CD8-positive, alpha-beta memory T cell (primary cell): ENCODE measurements at regions of chr3 and their contacts with region 1.

Region 1: DNA sequence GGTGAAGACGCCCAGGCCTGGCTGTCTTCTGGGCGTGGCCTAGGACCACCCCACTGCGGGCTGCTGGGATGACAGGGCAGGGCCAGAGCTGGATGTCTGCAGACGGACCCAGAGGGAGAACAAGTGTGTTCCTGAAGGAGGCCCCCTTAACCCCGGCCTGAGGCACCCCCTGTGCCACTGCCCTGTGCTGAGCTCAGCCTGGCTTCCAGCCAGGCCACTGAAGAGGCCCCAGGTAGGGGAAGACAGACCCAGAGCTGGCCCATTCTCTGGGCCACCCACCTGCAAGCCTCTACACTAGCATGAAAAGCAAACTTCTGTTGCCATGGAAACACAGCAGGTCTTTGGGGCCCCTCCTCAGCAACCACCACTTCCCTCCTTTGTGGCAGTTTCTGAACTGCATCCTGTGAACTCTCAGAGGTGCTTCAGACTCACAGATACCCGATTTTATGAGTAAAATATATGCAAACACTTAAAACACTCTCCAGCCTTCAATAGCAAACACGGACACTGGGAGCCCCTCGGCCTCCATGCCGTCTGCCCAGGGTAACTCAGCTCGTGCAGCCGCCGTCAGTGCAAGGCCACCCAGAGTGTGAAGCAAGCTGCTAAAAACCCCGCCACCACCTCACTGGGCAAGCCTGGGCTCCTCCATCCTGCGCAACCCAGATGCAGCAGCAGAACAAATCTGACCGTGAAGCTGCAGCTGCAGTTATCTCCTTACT is 42.5 kb downstream of the CMTM6 start:
- DNase-seq: peak; percentile 59 to 96 (median 92)
- H3K4me3 ChIP-seq: peak overlapping the region; percentile 53
- H3K4me3 Mint-ChIP-seq: peak overlapping the region in 4 of 7 donors; percentile 81 to 88 (median 88)
- H3K27ac ChIP-seq: peak overlapping the region; percentile 88
- H3K27ac Mint-ChIP-seq: no peak overlapping the region
- H3K4me1 ChIP-seq: peaks cover 83% of the 10 kb centered on the region
- H3K4me1 Mint-ChIP-seq: peaks cover 31 to 37% (median 33%) of the 10 kb centered on the region in 3 donors
- H3K27me3 ChIP-seq: no peaks in the 10 kb centered on the region
- H3K27me3 Mint-ChIP-seq: no peaks in the 10 kb centered on the region

Region 2: DNA sequence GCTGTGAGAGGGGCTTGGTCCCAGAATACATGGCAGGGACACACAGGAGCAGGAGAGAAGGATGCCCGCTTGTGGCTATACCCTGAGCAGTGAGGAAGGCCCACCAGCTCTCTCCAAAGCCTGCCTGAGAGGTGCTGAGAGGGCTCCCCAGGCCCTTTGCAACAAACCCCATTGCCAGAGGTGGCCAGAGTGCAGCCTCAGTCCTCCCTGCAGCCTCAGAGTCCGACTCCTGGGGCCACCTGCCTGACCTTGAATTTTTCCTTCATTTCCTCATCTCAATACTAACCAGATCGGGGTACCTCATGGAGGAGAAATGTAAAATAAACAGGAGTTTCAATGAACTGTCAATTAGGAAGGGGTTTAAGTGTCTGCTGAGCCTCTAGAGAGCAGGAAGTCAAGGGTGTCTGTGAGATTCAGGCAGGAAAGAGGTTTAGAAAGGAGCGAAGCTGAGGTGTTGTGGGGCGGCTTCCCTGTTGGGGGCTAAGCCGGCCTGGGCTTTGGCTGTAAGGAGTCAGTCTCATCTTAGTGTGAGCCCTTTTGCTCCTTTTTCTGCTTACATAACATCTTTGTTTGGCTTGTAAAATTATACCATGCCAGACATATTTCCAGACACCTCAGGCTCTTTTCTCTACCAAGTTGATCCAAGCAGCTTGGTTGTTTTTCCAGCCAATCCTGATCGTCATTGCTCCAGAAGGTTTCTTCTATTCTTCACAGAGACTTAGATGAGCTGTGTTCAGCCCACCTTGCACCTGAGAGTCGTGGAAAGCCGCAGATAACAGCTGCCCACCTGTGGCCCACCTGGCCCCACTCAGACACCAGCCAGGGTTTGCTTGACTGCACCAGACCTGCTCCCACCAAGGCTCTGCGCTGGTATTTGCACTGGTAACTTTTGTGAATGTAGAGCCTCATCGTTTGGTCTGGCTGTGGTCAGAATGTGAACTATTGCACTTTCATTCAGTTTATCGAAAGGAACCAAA is 31.8 kb before region 1 on chr3:
- CTCF ChIA-PET with region 1: interaction called, 19 read pairs
- POLR2A ChIA-PET with region 1: interaction called, 40 read pairs
- DNase-seq: peak; percentile 23 to 73 (median 63)
- H3K4me3 ChIP-seq: peak overlapping the region; percentile 48
- H3K4me3 Mint-ChIP-seq: peak overlapping the region; percentile 48 to 88 (median 77)
- H3K27ac ChIP-seq: peak overlapping the region; percentile 35
- H3K27ac Mint-ChIP-seq: peak overlapping the region; percentile 92 to 98 (median 96)
- H3K4me1 ChIP-seq: peaks cover 91% of the 10 kb centered on the region
- H3K4me1 Mint-ChIP-seq: peaks cover 85 to 98% (median 93%) of the 10 kb centered on the region in 3 donors
- H3K27me3 ChIP-seq: no peaks in the 10 kb centered on the region
- H3K27me3 Mint-ChIP-seq: peaks cover 0 to 1% of the 10 kb centered on the region in 2 donors

Region 3: GRCh38 chr3:32438596-32439344 is 21.4 kb before region 1 on chr3:
- CTCF ChIA-PET with region 1: interaction called, 37 read pairs
- POLR2A ChIA-PET with region 1: interaction called, 7 read pairs
- DNase-seq: no peak
- H3K4me3 ChIP-seq: no peak overlapping the region
- H3K4me3 Mint-ChIP-seq: peak overlapping the region; percentile 6 to 83 (median 64)
- H3K27ac ChIP-seq: no peak overlapping the region
- H3K27ac Mint-ChIP-seq: peak overlapping the region; percentile 82 to 95 (median 89)
- H3K4me1 ChIP-seq: peaks cover 49% of the 10 kb centered on the region
- H3K4me1 Mint-ChIP-seq: peaks cover 56 to 91% (median 60%) of the 10 kb centered on the region in 3 donors
- H3K27me3 ChIP-seq: no peaks in the 10 kb centered on the region
- H3K27me3 Mint-ChIP-seq: peaks cover 0 to 2% of the 10 kb centered on the region in 2 donors